ENCODE measurements at regions of chr6 and their contacts with region 1.

Region 1: DNA sequence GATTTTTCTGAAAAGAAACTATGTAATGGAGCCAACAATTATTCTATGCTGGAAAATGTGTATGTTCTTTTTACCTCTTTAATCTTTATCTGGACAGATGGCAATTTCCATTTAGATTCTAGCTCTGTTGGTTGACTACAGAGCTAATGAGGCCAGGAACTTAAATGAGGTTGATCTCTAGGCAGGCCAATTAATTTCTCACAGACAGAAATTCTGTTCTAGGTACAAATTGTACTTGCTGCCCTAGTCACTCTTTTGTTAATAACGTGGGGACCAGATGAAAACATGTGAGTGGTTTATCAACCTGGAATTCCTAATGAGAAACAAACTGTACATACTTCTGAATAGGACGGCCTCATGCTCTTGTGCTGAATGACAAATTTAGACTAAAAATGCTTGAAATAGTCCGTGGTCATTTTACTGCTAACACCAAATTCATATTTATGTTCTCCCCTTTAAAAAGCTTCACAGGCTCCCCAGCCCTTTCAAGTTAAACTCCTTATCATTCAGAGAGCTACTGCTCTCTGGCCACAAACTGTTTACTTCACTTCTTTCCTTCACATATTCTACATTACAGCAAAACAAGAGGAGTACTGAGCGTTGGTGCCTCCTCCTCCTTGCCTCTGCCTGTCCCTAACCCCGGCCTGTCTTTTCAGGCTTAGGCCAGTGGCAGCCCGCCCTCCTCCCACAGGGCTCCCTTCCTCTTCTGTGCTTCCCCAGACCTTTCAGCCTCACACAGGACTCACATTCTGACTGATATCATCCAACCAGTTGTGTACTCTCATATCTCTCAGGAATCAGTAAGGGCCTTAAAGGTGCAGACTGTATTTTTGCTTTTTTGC is 41.4 kb downstream of the DTNBP1 start:
- DNase-seq: no peak
- H3K4me3 Mint-ChIP-seq: no peak overlapping the region
- H3K27ac Mint-ChIP-seq: peak overlapping the region; percentile 16
- H3K4me1 Mint-ChIP-seq: peaks cover 27% of the 10 kb centered on the region
- H3K27me3 Mint-ChIP-seq: peaks cover 2% of the 10 kb centered on the region

Region 2: GRCh38 chr6:13908955-13909381 is 1712.5 kb before region 1 on chr6:
- intact Hi-C with region 1: loop called (anchors 1 kb)
- DNase-seq: peak; percentile 10
- H3K4me3 Mint-ChIP-seq: no peak overlapping the region
- H3K27ac Mint-ChIP-seq: no peak overlapping the region
- H3K4me1 Mint-ChIP-seq: no peaks in the 10 kb centered on the region
- H3K27me3 Mint-ChIP-seq: peaks cover 35% of the 10 kb centered on the region

Region 3: GRCh38 chr6:14210663-14211561 is 1410.5 kb before region 1 on chr6:
- intact Hi-C with region 1: loop called (anchors 1 kb)
- DNase-seq: peak; percentile 91
- H3K4me3 Mint-ChIP-seq: peak overlapping the region; percentile 80
- H3K27ac Mint-ChIP-seq: peak overlapping the region; percentile 70
- H3K4me1 Mint-ChIP-seq: peaks cover 29% of the 10 kb centered on the region
- H3K27me3 Mint-ChIP-seq: peaks cover 6% of the 10 kb centered on the region

Region 4: GRCh38 chr6:15429141-15430110 is 192.0 kb before region 1 on chr6:
- intact Hi-C with region 1: loop called (anchors 10 kb)
- DNase-seq: no peak
- H3K4me3 Mint-ChIP-seq: no peak overlapping the region
- H3K27ac Mint-ChIP-seq: no peak overlapping the region
- H3K4me1 Mint-ChIP-seq: peaks cover 93% of the 10 kb centered on the region
- H3K27me3 Mint-ChIP-seq: no peaks in the 10 kb centered on the region

Region 5: DNA sequence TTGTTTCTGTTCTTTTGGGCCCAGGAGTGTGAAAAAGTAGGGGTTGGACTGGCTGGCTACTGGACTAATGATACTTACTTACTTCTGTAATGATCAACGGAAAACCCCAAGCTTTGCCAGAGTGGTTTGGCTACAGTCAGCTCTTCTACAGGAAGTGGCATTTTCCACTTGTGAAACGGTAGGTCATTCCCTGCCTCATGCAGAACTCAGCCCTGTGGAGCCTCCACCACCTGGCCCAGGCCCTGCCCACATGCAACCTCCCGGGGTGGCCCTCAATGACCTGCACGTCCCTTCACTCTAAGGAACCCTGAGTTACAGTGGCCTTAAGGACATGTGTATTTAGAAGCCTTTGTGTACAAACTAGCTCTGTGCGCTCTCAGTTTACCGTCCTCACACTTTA is 99.0 kb before region 1 on chr6:
- intact Hi-C with region 1: loop called (anchors 5 kb)
- DNase-seq: no peak
- H3K4me3 Mint-ChIP-seq: no peak overlapping the region
- H3K27ac Mint-ChIP-seq: peak overlapping the region; percentile 65
- H3K4me1 Mint-ChIP-seq: peaks cover 26% of the 10 kb centered on the region
- H3K27me3 Mint-ChIP-seq: no peaks in the 10 kb centered on the region